ENCODE measurements at regions of chr16 and their contacts with region 1.

Region 1: DNA sequence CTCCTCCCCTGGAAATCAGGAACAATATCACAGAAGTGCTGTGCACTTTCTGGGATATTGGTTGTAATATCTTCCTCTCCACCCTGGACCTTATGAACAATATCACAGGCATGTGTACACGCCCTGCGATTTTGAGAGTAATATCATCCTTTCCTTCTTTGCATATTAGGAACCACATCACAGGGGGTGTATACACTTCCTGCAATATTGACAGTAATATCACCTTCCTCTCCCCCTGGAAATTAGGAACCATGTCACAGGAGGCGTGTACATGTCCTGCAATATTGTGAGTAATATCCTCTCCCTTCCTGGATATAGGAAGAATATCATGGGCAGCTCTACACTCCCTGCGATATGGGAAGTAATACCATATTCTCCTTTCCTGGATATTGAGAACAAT is 14.2 kb upstream of the TEKT5 start:
- DNase-seq: no peak
- ATAC-seq: no peak
- H3K4me3 ChIP-seq: no peak overlapping the region
- H3K27ac ChIP-seq: no peak overlapping the region
- H3K4me1 ChIP-seq: no peaks in the 10 kb centered on the region
- H3K27me3 ChIP-seq: peaks cover 0 to 14% (median 0%) of the 10 kb centered on the region in 9 donors
- CTCF ChIP-seq: no peak
- POLR2A ChIP-seq: no peak

Region 2: GRCh38 chr16:10641953-10642949 is 66.7 kb before region 1 on chr16:
- intact Hi-C with region 1: loop called in 1 of 10 experiments (anchors 10 kb)
- DNase-seq: no peak
- ATAC-seq: no peak
- H3K4me3 ChIP-seq: no peak overlapping the region
- H3K27ac ChIP-seq: no peak overlapping the region
- H3K4me1 ChIP-seq: no peaks in the 10 kb centered on the region
- H3K27me3 ChIP-seq: no peaks in the 10 kb centered on the region
- CTCF ChIP-seq: no peak
- POLR2A ChIP-seq: no peak